PC-3 (cell line): ENCODE measurements at regions of chr2 and their contacts with region 1.

Region 1: GRCh38 chr2:45119855-45120254 is 110.6 kb upstream of the SIX2 start:
- DNase-seq: peak; percentile 93
- ATAC-seq: peak; percentile 86
- H3K4me3 ChIP-seq: no peak overlapping the region
- H3K27ac ChIP-seq: peak overlapping the region; percentile 84
- H3K4me1 ChIP-seq: peaks cover 49% of the 10 kb centered on the region
- H3K27me3 ChIP-seq: no peaks in the 10 kb centered on the region
- CTCF ChIP-seq: no peak

Region 2: GRCh38 chr2:45018023-45018422 is 101.8 kb before region 1 on chr2:
- CTCF ChIA-PET with region 1: no interaction called
- POLR2A ChIA-PET with region 1: no interaction called
- intact Hi-C with region 1: no loop called
- DNase-seq: no peak
- ATAC-seq: no peak
- H3K4me3 ChIP-seq: no peak overlapping the region
- H3K27ac ChIP-seq: no peak overlapping the region
- H3K4me1 ChIP-seq: no peaks in the 10 kb centered on the region
- H3K27me3 ChIP-seq: no peaks in the 10 kb centered on the region
- CTCF ChIP-seq: no peak

Region 3: DNA sequence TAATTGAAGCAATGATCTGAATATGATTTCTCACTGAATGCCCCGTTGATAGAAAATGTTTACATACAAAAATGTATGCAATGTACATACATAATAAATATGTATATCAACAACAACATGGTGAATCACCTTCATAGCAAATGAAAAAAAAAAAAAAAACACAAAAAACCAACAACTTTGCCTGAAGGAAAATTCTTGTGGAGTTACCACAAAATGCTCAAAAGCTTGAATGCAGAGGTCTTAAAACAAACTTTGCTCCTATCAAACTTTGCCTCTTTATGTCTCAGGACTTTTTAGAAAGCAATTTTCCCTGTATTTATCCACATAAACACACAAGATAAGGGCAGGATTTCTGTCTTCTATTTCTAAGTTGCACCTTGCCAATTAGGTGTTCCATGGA is 17.7 kb before region 1 on chr2:
- CTCF ChIA-PET with region 1: no interaction called
- POLR2A ChIA-PET with region 1: no interaction called
- intact Hi-C with region 1: loop called (anchors 1 kb)
- DNase-seq: peak; percentile 59
- ATAC-seq: no peak
- H3K4me3 ChIP-seq: peak overlapping the region; percentile 7; the same call in 1 of the 2 replicates
- H3K27ac ChIP-seq: peak overlapping the region; percentile 43
- H3K4me1 ChIP-seq: peaks cover 38% of the 10 kb centered on the region
- H3K27me3 ChIP-seq: no peaks in the 10 kb centered on the region
- CTCF ChIP-seq: no peak

Region 4: GRCh38 chr2:45412754-45413379 is 293.0 kb after region 1 on chr2:
- CTCF ChIA-PET with region 1: no interaction called
- POLR2A ChIA-PET with region 1: no interaction called
- intact Hi-C with region 1: loop called (anchors 1 kb)
- DNase-seq: no peak
- ATAC-seq: peak; percentile 71
- H3K4me3 ChIP-seq: no peak overlapping the region
- H3K27ac ChIP-seq: no peak overlapping the region
- H3K4me1 ChIP-seq: no peaks in the 10 kb centered on the region
- H3K27me3 ChIP-seq: no peaks in the 10 kb centered on the region
- CTCF ChIP-seq: no peak